Thyroid gland (tissue), 4 donors: ENCODE measurements at regions of chr13 and their contacts with region 1.

Region 1: DNA sequence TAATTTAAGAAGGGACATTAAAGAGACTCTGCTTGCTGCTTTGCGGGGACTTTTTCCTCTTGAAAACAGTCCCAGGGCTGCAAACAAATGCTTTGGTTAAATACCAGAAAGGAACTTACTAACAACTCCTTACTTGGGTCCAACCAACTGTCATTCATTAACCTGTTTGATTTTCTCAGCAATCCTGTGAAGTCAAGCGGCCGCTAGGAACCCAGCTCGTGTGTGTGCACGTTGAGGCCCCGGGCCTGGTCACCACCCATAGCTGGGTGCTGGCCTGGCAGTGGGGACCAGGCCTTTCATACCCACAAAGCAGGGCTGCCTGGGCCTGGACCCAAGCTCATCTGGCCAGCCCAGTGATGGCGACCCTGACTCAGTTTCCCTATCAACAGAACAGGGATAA is 50.7 kb downstream of the C1QTNF9 start:
- DNase-seq: no peak
- H3K4me3 ChIP-seq: no peak overlapping the region
- H3K27ac ChIP-seq: no peak overlapping the region
- H3K4me1 ChIP-seq: no peaks in the 10 kb centered on the region
- H3K27me3 ChIP-seq: no peaks in the 10 kb centered on the region
- CTCF ChIP-seq: no peak
- POLR2A ChIP-seq: no peak

Region 2: DNA sequence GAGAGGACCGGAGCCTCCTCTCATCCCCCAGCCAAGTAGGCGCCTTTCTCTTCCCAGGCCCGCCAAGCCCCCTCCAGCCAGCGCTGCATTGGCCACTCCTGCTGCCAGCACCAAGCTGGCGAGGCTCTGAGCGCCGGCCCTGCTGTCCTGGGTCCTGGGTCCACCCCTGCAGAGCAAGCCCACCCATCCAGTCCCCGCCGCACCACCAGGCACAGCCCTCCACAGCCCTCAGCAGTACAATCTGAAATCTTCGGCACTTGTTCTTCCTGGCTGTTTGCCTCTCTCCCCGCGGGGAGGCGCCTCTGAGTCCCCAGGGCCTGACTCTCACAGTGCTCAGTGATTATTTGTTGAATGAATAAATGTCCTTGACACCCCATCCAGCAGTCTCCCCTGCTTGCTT is 1415.7 kb before region 1 on chr13:
- intact Hi-C with region 1: loop called (anchors 10 kb)
- DNase-seq: no peak
- H3K4me3 ChIP-seq: no peak overlapping the region
- H3K27ac ChIP-seq: no peak overlapping the region
- H3K4me1 ChIP-seq: no peaks in the 10 kb centered on the region
- H3K27me3 ChIP-seq: no peaks in the 10 kb centered on the region
- CTCF ChIP-seq: no peak
- POLR2A ChIP-seq: no peak

Region 3: DNA sequence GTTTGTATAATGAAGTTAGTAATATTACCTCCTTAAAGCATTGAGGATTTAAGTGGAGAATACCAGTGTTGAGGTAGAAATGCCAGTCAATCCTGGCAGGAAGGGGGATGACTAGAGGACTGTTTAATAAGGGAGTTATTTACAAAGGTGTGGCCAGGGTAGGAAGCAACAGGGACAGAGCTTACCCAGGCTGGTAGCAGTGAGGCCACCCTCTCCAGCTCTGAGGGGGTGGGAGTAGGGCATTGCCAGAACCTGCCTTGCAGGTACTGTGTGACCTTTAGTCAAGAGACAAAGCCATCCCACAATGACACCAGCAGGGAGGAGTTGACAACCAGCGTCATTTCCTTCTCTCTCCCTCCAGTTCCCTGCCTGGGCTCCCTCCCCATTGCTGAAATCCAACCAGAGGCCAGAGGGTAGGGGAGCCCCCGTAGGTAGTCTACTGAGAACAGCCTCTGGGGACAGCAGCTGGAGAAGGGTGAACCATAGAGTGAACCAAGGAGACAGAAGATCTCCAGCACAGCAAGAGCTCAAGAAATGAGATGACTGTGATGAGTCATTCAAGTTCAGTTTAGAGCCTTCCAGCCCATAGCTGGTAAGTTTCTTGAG is 233.0 kb before region 1 on chr13:
- intact Hi-C with region 1: no loop called
- DNase-seq: no peak
- H3K4me3 ChIP-seq: no peak overlapping the region
- H3K27ac ChIP-seq: no peak overlapping the region
- H3K4me1 ChIP-seq: no peaks in the 10 kb centered on the region
- H3K27me3 ChIP-seq: no peaks in the 10 kb centered on the region
- CTCF ChIP-seq: no peak
- POLR2A ChIP-seq: no peak

Region 4: DNA sequence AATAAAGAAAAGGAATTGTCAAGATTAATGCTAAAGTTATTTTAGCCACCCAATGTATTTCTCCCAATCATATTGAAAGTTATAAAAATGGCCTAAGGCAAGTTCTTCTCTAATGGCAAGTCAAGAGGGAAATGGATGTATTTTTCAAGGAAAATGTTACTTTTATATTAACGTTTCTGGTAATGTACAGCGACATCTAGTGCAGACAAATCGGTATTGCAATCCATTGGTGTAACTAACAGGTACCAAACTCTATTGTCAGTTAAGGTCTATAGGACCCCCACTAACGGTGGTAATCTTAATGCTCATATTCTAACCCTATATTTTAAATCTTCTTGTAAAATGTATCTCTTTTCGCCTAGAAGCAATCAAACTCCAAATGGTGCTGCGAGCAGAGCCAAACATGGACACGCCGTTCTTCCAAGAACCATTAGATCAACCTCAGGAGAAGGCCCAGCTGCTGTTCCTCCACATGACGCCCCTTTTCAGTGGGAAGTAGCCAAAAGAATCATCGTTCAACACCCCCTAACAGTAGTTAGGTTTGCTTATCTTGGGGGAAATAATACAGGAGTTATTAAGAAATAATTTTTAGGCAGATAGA is 637.4 kb after region 1 on chr13:
- intact Hi-C with region 1: no loop called
- DNase-seq: no peak
- H3K4me3 ChIP-seq: no peak overlapping the region
- H3K27ac ChIP-seq: no peak overlapping the region
- H3K4me1 ChIP-seq: peaks cover 10 to 11% of the 10 kb centered on the region in 2 donors
- H3K27me3 ChIP-seq: no peaks in the 10 kb centered on the region
- CTCF ChIP-seq: peak; percentile 29 to 80 (median 58)
- POLR2A ChIP-seq: no peak